ENCODE measurements at regions of chr6 and their contacts with region 1.

Region 1: GRCh38 chr6:36326356-36326995 is 10.2 kb downstream of the BNIP5 start:
- DNase-seq: no peak
- H3K4me3 Mint-ChIP-seq: no peak overlapping the region
- H3K27ac Mint-ChIP-seq: no peak overlapping the region
- H3K4me1 Mint-ChIP-seq: no peaks in the 10 kb centered on the region
- H3K27me3 Mint-ChIP-seq: peaks cover 10% of the 10 kb centered on the region

Region 2: DNA sequence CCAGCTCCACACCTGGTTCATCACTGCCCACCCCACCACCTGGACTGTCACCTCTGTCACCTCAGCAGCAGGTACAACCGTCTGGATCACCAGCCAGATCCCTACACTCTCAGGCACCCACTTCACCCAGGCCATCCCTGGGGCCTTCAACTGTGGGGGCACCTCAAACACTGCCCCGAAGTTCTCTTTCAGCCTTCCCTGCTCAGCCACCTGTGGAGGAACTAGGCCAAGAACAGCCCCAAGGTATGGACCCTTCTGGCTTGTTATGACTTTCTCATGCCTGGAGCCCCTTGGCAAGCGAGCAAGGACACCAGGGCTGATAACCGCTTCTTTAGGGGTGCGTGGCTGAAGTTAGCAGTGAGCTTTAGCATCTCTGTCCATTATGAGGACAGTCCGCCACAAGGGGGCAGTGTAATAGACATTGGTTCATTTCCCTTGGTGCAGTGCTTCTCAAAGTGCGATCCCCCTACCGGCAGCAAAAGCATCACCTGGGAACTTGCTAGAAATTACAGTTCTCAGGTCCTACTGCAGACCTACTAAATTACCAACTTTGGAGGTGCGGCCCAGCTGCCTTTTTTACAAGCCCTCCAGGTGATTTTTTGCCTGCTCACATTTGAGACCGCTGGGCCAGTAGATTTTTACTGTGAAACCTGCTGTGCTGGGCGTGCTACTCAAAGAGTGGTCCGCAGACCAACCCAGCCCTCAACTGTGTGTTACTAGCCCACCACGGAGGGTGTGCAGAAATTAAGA is 24.1 kb before region 1 on chr6:
- CTCF ChIA-PET with region 1: interaction called, 11 read pairs
- POLR2A ChIA-PET with region 1: no interaction called
- DNase-seq: peak; percentile 97
- H3K4me3 Mint-ChIP-seq: no peak overlapping the region
- H3K27ac Mint-ChIP-seq: no peak overlapping the region
- H3K4me1 Mint-ChIP-seq: peaks cover 6% of the 10 kb centered on the region
- H3K27me3 Mint-ChIP-seq: peaks cover 11% of the 10 kb centered on the region

Region 3: DNA sequence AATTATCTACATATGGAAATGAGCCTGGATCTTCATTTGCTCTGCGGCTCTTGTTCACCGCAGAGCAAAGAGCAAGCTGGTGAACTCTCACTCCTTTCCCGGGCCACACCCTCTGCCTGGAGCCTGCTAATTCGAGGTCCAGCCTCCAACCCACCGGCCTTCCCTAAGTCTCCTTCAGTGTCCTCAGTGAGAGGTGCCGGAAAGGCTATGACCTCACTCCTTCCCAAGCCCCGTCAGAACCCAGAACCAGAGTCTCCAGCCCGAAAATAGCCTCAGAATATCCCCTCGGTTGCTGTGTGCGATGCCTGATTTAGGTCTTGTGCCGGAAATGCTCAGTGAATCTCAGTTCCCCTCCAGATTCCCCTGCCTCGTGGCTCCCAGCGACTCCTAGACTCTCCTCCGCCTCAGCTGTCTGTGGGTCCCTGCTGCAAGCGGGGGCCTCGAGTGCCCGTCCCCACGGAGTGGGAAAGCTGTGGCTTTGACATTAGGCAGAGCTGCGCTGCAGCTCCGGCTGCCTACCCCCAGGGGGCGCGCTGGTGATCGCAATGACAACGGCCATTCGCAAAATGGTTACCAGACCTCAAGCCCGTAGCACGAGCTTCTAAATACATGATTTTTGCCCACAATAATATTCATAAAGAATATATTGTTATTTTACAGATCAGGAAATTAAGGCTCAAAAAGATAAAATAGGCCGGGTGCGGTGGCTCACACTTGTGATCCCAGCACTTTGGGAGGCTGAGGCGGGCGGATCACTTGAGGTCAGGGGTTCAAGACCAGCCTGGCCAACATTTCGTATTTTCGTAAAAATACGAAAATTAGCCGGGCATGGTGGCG is 14.4 kb after region 1 on chr6:
- CTCF ChIA-PET with region 1: interaction called, 16 read pairs
- POLR2A ChIA-PET with region 1: no interaction called
- DNase-seq: peak; percentile 73
- H3K4me3 Mint-ChIP-seq: no peak overlapping the region
- H3K27ac Mint-ChIP-seq: no peak overlapping the region
- H3K4me1 Mint-ChIP-seq: peaks cover 11% of the 10 kb centered on the region
- H3K27me3 Mint-ChIP-seq: peaks cover 23% of the 10 kb centered on the region